Right ventricle myocardium superior (tissue), 1 donor: ENCODE measurements at regions of chrX and their contacts with region 1.

Region 1: GRCh38 chrX:54182864-54183608 is at the start of gene FAM120C:
- DNase-seq: peak; percentile 75
- ATAC-seq: peak; percentile 92
- total RNA-seq, gene FAM120C: 6.1 TPM

Region 2: DNA sequence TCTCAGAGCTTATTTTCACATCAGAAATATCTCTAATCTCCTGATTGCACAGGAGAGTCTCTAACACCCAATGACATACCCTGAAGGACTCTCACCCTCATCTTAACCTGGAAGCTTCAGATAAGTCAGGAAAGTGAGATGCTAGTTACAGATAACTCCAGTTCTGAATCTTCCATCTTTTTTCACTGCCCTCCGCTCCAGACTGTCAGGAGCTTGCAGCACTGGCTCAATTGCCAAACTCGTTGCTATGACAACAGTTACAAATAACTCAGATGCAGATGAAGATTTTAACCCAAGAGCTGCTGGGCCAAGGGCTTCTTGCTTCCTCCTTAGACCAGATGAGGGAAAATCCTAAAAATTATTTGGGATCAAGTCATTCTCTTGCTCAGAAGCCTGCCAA is 387.5 kb before region 1 on chrX:
- intact Hi-C with region 1: no loop called
- DNase-seq: no peak
- ATAC-seq: no peak

Region 3: DNA sequence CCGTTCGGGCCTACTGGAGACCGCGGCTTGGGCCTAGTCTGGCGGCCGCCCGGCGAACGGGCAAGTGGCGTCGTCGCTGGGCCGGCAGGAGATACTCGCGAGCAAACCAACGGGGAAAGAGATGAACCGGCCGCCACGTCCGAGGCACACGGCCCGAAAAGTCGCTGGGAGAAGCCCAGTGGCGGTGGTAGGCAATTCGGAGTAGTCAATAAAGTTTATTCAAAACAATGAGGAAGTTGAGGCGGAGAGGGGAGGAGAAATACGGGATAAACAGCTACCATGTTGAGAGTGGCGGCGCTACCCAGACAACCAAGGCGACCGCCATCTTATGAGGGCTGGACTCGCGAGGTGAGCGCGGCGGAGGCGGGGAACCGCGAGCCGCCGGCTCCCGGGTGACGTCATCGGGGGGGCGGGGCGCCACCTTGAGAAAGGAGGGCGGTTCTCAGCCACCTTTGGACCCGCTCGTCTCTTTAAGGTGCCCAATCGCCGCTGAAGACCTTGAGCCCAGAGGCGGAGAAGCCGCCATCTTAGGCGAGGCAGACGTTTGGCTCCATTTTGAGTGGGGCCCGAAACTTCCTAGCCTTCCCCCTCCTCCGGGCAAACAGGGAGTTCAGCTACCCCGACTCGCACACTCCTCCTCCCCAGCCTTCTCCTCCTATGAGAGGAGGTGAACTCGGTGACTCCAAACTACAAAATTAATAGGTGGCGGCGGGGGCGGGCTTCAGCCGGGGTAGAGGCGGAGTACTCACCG is 138.7 kb before region 1 on chrX and contains the start of gene PHF8:
- intact Hi-C with region 1: loop called (anchors 10 kb)
- DNase-seq: peak; percentile 96
- ATAC-seq: peak; percentile 95
- total RNA-seq, gene PHF8: 10.8 TPM